Aorta (tissue), 5 donors: ENCODE measurements at regions of chr20 and their contacts with region 1.

Region 1: DNA sequence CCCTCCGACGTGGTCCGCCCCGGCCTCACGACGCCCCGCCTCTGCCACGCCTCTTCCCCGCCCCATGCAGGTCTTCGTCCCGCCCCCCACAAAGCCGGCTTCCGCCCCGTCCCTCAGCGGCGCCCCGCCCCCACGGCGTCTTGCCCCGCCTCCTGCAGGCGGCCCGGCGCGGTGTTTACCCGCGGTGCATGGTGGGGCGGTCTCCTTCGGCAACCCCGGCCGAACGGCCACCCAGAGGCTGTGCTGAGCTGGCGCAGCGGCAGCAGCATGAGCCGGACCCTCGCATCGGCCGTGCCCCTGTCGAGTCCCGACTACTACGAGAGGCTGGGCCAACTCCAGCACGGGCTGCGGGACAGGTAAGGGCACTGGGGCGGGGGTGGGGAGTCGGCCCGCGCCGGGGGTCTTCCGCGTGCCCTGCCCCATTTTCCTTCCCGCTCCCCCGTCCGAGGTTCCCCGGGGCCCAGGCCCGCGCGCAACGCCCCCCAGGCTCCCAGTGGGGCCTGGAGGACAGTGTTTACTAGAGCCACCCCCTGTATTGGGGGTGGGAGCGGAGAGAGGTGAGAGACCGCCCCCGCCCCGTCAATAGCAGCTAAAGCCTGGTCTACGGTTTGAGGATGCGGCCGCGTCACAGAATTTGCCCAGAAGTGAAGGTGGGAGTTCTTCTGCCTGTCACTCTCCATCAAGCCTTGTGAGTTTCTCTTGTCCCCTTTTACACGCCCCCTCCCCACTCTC is at the start of gene KIZ:
- DNase-seq: peak; percentile 97 to 100
- ATAC-seq: peak; percentile 100
- H3K4me3 ChIP-seq: peak within 1 kb of the TSS; percentile 84 to 95
- H3K27ac ChIP-seq: peak within 1 kb of the TSS in 1 of 2 donors; percentile 11
- H3K4me1 ChIP-seq: no peaks in the 10 kb centered on the region
- H3K27me3 ChIP-seq: no peaks in the 10 kb centered on the region
- total RNA-seq, gene KIZ: 22.0 to 29.4 TPM

Region 2: DNA sequence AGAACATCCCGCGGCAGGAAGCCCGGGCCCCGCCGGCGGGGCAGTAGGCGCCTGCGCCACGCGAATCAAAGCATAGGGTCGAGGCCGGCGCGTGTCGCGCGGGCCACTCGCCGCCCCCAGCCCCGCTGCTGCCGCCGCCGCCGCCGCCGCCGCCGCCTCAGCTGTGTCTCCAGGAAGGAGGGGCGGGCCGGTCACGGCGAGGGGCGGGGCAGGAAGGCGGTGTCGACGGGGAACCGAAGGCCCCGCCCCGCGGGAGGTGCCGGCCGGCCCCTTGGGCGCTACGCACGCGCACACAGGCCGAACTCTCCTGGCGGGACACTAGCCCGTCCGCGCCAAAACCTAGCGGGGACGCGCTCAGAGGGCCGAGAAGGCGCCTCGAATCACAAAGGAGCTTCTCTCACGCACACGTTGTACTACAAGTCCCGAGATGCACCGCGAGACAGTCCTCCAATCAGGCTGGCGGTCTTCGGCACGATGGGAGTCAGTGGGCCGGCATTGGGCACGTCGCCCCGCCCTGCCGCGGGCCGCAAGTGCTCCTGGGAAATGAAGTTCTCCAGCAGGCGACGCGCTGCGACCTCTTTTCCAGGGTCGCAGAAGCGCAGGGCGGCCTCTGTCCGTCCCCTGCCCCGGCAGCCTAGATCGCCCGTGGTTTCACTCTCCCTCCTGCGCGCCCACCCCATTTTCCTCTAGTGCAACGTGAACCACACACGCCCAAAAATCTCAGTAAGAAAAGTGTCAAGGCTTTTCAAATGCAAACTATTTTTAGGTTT is 413.4 kb before region 1 on chr20 and contains the start of gene RALGAPA2:
- intact Hi-C with region 1: loop called (anchors 5 to 10 kb)
- DNase-seq: peak; percentile 98 to 99
- ATAC-seq: peak; percentile 99
- H3K4me3 ChIP-seq: peak within 1 kb of the TSS; percentile 84 to 96
- H3K27ac ChIP-seq: peak within 1 kb of the TSS; percentile 8 to 71
- H3K4me1 ChIP-seq: peaks cover 0 to 5% of the 10 kb centered on the region in 2 donors
- H3K27me3 ChIP-seq: no peaks in the 10 kb centered on the region
- total RNA-seq, gene RALGAPA2: 34.8 to 62.3 TPM

Region 3: GRCh38 chr20:21063276-21063675 is 62.7 kb before region 1 on chr20:
- intact Hi-C with region 1: no loop called
- DNase-seq: no peak
- ATAC-seq: no peak
- H3K4me3 ChIP-seq: no peak overlapping the region
- H3K27ac ChIP-seq: no peak overlapping the region
- H3K4me1 ChIP-seq: no peaks in the 10 kb centered on the region
- H3K27me3 ChIP-seq: no peaks in the 10 kb centered on the region

Region 4: DNA sequence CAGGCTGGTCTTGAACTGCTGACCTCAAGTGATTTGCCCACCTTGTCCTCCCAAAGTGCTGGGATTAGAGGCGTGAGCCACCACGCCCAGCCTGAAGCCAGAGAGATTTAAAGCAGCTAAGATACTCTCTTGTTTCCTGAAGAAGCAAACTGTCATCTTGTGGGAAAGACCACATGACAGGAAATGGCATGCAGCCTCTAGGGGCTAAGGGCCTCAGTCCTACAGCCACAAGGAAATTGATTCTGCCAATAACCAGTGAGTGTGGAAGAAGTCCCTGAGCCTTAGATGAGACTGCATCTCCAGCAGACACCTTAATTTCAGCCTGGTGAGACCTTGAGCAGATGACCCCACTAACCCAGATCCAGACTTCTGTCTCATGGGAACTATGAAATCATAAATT is 40.8 kb after region 1 on chr20:
- intact Hi-C with region 1: no loop called
- DNase-seq: no peak
- ATAC-seq: no peak
- H3K4me3 ChIP-seq: no peak overlapping the region
- H3K27ac ChIP-seq: no peak overlapping the region
- H3K4me1 ChIP-seq: no peaks in the 10 kb centered on the region
- H3K27me3 ChIP-seq: no peaks in the 10 kb centered on the region

Region 5: DNA sequence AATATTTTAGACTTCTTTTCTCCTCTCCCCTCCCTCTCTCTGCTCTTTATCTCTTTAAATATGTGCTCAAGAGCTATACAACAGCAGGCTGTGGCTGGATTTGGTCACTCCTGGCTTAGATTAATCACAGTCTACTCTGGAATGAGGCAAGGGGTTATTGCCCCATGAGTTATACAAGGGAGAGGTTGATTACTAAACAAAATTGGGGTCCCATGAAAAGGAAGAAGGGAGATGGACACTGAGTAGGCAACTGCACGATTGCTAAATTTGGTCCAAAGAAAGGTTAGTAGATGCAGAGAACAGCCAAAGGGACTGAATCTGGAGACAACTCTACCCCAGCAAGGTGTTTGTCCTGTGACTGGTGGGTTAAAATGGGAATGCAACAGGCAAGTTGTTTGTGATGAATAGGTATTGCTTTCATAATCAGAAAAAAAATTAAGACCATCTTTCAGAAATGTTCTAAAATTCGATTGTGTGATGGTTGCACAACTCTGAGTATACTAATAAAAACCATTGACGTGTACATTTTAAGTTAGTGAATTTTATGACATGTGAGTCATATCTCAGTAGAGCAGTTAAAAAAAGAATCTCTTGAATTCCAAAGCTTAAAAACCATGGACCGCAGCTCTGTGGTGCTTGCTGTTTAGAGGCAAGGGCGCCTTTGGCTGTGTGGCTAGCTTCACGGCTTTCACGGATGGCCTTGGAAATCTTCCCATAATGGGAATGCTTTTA is 57.0 kb after region 1 on chr20:
- intact Hi-C with region 1: loop called in 1 of 2 experiments (anchors 5 kb)
- DNase-seq: no peak
- ATAC-seq: peak; percentile 89
- H3K4me3 ChIP-seq: peak overlapping the region in 1 of 2 donors; percentile 10
- H3K27ac ChIP-seq: peak overlapping the region; percentile 5 to 40
- H3K4me1 ChIP-seq: peaks cover 8 to 9% of the 10 kb centered on the region in 2 donors
- H3K27me3 ChIP-seq: no peaks in the 10 kb centered on the region

Region 6: GRCh38 chr20:21303061-21303871 is 177.3 kb after region 1 on chr20 and contains the start of gene XRN2:
- intact Hi-C with region 1: loop called (anchors 5 kb)
- DNase-seq: peak; percentile 98 to 99
- ATAC-seq: peak; percentile 100
- H3K4me3 ChIP-seq: peak within 1 kb of the TSS; percentile 67 to 90
- H3K27ac ChIP-seq: peak within 1 kb of the TSS; percentile 32 to 85
- H3K4me1 ChIP-seq: no peaks in the 10 kb centered on the region
- H3K27me3 ChIP-seq: no peaks in the 10 kb centered on the region
- total RNA-seq, gene XRN2: 44.1 to 48.3 TPM